GM12878 (cell line): ENCODE measurements at regions of chr13 and their contacts with region 1.

Region 1: GRCh38 chr13:23752111-23753001 is 136.8 kb downstream of the MIPEP start:
- DNase-seq: peak; percentile 69
- ATAC-seq: peak; percentile 85
- H3K4me3 ChIP-seq: no peak overlapping the region
- H3K27ac ChIP-seq: peak overlapping the region; percentile 86
- H3K4me1 ChIP-seq: peaks cover 42% of the 10 kb centered on the region
- H3K27me3 ChIP-seq: no peaks in the 10 kb centered on the region
- CTCF ChIP-seq: no peak
- EP300 ChIP-seq: peak; percentile 33 to 74; a peak in 3 of 4 replicates
- POLR2A ChIP-seq: no peak
- RAD21 ChIP-seq: peak; percentile 29; the same call in 1 of the 2 replicates

Region 2: GRCh38 chr13:23715762-23716235 is 36.6 kb before region 1 on chr13:
- CTCF ChIA-PET with region 1: no interaction called
- POLR2A ChIA-PET with region 1: no interaction called
- RAD21 ChIA-PET with region 1: interaction called, 6 read pairs
- SMC1A ChIA-PET with region 1: interaction called, 13 read pairs
- in situ Hi-C with region 1: no loop called
- intact Hi-C with region 1: no loop called
- DNase-seq: no peak
- ATAC-seq: peak; percentile 40
- H3K4me3 ChIP-seq: no peak overlapping the region
- H3K27ac ChIP-seq: no peak overlapping the region
- H3K4me1 ChIP-seq: peaks cover 8% of the 10 kb centered on the region
- H3K27me3 ChIP-seq: no peaks in the 10 kb centered on the region
- CTCF ChIP-seq: peak; percentile 17 to 46 (median 38); a peak in 3 of 6 replicates
- EP300 ChIP-seq: no peak
- POLR2A ChIP-seq: no peak
- RAD21 ChIP-seq: peak; percentile 56

Region 3: DNA sequence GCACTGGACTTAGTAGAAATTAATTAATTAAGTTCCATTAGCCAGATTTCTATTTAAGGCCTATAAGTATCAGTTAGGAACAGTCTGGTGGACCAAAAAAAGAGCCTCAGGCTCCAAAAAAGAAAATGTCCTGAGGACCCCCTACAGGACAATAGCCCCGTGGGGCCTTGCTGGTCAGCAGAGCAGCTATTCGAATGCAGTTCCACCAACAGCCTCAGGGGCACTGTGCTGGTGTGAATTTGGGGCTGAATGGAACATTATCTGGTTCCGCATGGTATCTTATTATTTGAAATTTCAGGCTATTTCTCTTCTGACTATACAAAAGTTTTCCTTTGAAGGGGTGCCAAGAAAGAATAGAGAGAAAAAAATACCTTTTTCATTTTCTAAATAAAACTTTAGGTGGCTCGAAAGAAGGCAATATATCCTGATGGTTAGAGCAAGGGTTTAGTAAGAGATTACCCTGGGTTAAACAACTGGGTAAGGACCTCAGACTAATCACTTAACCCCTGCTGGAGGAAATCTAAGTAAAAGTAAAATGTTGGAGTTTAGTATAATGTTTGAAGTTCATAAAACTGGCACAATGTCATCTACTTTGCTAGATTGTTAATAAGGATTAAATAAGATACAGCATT is 10.4 kb before region 1 on chr13:
- CTCF ChIA-PET with region 1: interaction called, 15 read pairs
- POLR2A ChIA-PET with region 1: no interaction called
- RAD21 ChIA-PET with region 1: no interaction called
- SMC1A ChIA-PET with region 1: interaction called, 9 read pairs
- in situ Hi-C with region 1: no loop called
- intact Hi-C with region 1: no loop called
- DNase-seq: no peak
- ATAC-seq: peak; percentile 78
- H3K4me3 ChIP-seq: no peak overlapping the region
- H3K27ac ChIP-seq: no peak overlapping the region
- H3K4me1 ChIP-seq: no peaks in the 10 kb centered on the region
- H3K27me3 ChIP-seq: no peaks in the 10 kb centered on the region
- CTCF ChIP-seq: peak; percentile 17 to 58 (median 57)
- EP300 ChIP-seq: no peak
- POLR2A ChIP-seq: no peak
- RAD21 ChIP-seq: no peak

Region 4: DNA sequence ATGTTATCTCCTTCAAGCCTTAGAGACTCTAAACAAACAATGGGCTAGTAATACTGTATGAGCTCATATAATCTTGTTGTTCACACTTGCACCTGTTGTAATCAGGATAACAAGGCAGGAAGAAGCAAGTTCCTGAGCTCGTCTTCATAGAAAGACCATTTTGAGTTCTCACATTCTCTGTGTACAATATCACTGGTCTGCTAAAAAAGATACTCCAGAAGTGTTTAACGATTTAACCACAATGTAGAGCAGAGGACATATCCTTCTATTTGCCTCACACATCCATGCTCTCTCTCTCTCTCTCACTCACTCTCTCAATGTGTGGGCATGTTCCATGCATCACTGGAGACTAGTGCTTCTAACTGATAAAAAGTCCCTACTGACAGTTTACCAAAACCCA is 13.9 kb after region 1 on chr13:
- CTCF ChIA-PET with region 1: interaction called, 5 read pairs
- POLR2A ChIA-PET with region 1: no interaction called
- RAD21 ChIA-PET with region 1: interaction called, 4 read pairs
- SMC1A ChIA-PET with region 1: interaction called, 11 read pairs
- in situ Hi-C with region 1: no loop called
- intact Hi-C with region 1: no loop called
- DNase-seq: no peak
- ATAC-seq: peak; percentile 67
- H3K4me3 ChIP-seq: no peak overlapping the region
- H3K27ac ChIP-seq: no peak overlapping the region; the same call in 1 of the 2 replicates
- H3K4me1 ChIP-seq: peaks cover 31% of the 10 kb centered on the region
- H3K27me3 ChIP-seq: no peaks in the 10 kb centered on the region
- CTCF ChIP-seq: no peak
- EP300 ChIP-seq: no peak; a peak in 1 of 4 replicates
- POLR2A ChIP-seq: no peak
- RAD21 ChIP-seq: 0 out of 2 replicates have a peak, but pooled peaks have one; percentile 1

Region 5: GRCh38 chr13:23794267-23795161 is 42.2 kb after region 1 on chr13:
- CTCF ChIA-PET with region 1: no interaction called
- POLR2A ChIA-PET with region 1: interaction called, 3 read pairs
- RAD21 ChIA-PET with region 1: interaction called, 4 read pairs
- SMC1A ChIA-PET with region 1: interaction called, 3 read pairs
- in situ Hi-C with region 1: no loop called
- intact Hi-C with region 1: loop called (anchors 2 kb)
- DNase-seq: peak; percentile 72
- ATAC-seq: peak; percentile 72
- H3K4me3 ChIP-seq: 0 out of 2 replicates have a peak overlapping the region, but pooled peaks have one; percentile 22
- H3K27ac ChIP-seq: peak overlapping the region; percentile 93
- H3K4me1 ChIP-seq: peaks cover 51% of the 10 kb centered on the region
- H3K27me3 ChIP-seq: no peaks in the 10 kb centered on the region
- CTCF ChIP-seq: no peak
- EP300 ChIP-seq: peak; percentile 67 to 98
- POLR2A ChIP-seq: no peak
- RAD21 ChIP-seq: no peak

Region 6: GRCh38 chr13:23810685-23811240 is 58.4 kb after region 1 on chr13:
- CTCF ChIA-PET with region 1: interaction called, 6 read pairs
- POLR2A ChIA-PET with region 1: interaction called, 3 read pairs
- RAD21 ChIA-PET with region 1: interaction called, 5 read pairs
- SMC1A ChIA-PET with region 1: interaction called, 13 read pairs
- in situ Hi-C with region 1: no loop called
- intact Hi-C with region 1: no loop called
- DNase-seq: no peak
- ATAC-seq: peak; percentile 76
- H3K4me3 ChIP-seq: no peak overlapping the region
- H3K27ac ChIP-seq: peak overlapping the region; percentile 81
- H3K4me1 ChIP-seq: peaks cover 56% of the 10 kb centered on the region
- H3K27me3 ChIP-seq: no peaks in the 10 kb centered on the region
- CTCF ChIP-seq: peak; percentile 41 to 57 (median 51); a peak in 4 of 6 replicates
- EP300 ChIP-seq: 0 out of 4 replicates have a peak, but pooled peaks of 1 of the 2 experiments have one; percentile 35
- POLR2A ChIP-seq: no peak
- RAD21 ChIP-seq: peak; percentile 53